OCI-LY7 (cell line): ENCODE measurements at regions of chr15 and their contacts with region 1.

Region 1: DNA sequence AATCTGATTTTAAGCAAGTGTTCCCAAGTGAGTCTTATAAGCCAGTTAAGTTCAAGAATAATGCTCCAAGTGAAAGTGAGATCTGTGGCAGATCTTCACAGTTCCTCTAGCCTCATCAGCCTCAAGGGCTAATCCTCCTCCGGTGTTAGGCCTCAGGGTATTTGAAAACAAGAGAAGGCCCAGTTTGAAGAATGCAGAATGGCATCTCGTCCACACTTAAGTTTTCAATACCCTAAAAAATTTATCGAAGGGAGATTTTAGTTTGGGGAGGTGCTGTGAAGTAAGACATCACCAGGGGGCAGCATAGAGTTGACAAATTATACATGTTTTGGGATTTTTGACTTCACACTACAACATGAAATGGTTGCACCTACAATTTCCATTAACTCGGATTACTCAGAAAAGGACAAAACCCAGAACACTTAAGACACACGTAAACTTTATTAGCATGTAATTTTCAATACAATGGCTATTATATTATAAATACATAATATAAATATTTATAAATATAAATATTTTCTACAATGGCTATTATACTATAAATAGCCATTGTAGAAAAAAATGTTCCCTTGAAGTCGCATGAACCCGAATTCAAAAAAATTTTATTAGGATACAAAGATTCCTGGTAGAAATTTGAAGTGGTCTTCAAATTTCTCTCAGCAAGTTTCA is 2.3 kb upstream of the TMEM266 start:
- DNase-seq: peak; percentile 60
- H3K4me3 ChIP-seq: no peak overlapping the region
- H3K27ac ChIP-seq: peak overlapping the region; percentile 40
- H3K4me1 ChIP-seq: peaks cover 13% of the 10 kb centered on the region
- CTCF ChIP-seq: peak; percentile 90

Region 2: GRCh38 chr15:75867449-75867848 is 190.0 kb before region 1 on chr15:
- CTCF ChIA-PET with region 1: no interaction called
- POLR2A ChIA-PET with region 1: no interaction called
- intact Hi-C with region 1: no loop called
- DNase-seq: no peak
- H3K4me3 ChIP-seq: no peak overlapping the region
- H3K27ac ChIP-seq: no peak overlapping the region
- H3K4me1 ChIP-seq: peaks cover 6% of the 10 kb centered on the region
- CTCF ChIP-seq: no peak

Region 3: GRCh38 chr15:76139368-76140073 is 82.1 kb after region 1 on chr15:
- CTCF ChIA-PET with region 1: interaction called, 7 read pairs
- POLR2A ChIA-PET with region 1: interaction called, 3 read pairs
- intact Hi-C with region 1: loop called (anchors 1 kb)
- DNase-seq: peak; percentile 67
- H3K4me3 ChIP-seq: no peak overlapping the region
- H3K27ac ChIP-seq: no peak overlapping the region
- H3K4me1 ChIP-seq: no peaks in the 10 kb centered on the region
- CTCF ChIP-seq: peak; percentile 89

Region 4: GRCh38 chr15:76150971-76151598 is 93.6 kb after region 1 on chr15:
- CTCF ChIA-PET with region 1: no interaction called
- POLR2A ChIA-PET with region 1: no interaction called
- intact Hi-C with region 1: loop called (anchors 5 kb)
- DNase-seq: peak; percentile 77
- H3K4me3 ChIP-seq: no peak overlapping the region
- H3K27ac ChIP-seq: no peak overlapping the region
- H3K4me1 ChIP-seq: peaks cover 9% of the 10 kb centered on the region
- CTCF ChIP-seq: peak; percentile 92